ENCODE measurements at regions of chr14 and their contacts with region 1.

Region 1: GRCh38 chr14:59126710-59127432 is 61.6 kb upstream of the DAAM1 start:
- DNase-seq: no peak
- ATAC-seq: peak; percentile 92
- H3K4me3 ChIP-seq: no peak overlapping the region
- H3K27ac ChIP-seq: no peak overlapping the region
- H3K4me1 ChIP-seq: no peaks in the 10 kb centered on the region
- H3K27me3 ChIP-seq: no peaks in the 10 kb centered on the region
- CTCF ChIP-seq: peak; percentile 64 to 87 (median 64)
- EP300 ChIP-seq: no peak
- POLR2A ChIP-seq: no peak
- RAD21 ChIP-seq: peak; percentile 94

Region 2: DNA sequence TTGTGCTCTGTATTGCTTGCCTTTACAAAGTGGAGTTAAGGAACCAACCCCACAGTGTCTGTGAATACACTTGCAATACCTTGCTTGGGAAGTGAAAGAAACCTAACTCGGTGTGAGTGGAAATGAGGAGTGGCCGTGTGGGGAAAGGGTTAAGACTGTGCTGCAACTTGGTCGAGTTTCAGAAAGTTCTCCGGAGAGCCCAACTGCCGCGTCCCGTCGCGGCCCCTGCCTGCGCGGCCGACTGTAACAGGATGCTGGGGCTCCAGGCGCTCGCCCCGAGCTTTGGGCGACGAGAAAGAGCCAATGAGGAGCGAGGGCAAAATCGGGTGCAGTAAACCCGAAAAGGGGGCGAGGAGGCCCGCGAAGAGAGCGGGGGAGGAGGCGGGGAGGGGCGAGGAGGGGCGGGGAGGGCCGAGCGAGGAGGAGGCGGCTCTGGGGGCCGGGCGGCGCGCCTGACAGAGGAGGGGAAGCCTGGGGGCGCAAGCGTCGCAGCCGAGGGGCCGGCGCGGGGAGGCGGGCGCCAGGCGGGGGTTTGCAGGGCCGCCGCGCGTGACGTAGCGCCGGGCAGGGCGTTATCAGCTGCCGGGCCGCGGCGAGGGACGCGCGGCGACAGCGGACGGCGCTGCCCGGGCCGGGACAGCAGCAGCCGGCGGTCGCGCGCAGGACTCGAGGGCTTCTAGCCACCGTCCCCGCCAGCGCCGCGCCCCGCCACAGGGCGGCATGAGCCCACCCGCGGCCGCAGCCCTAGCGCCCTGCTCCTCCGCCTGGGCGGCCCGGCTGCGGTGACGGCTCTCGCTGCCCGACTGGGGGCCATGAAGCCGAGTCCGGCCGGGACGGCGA is 489.3 kb before region 1 on chr14 and contains the start of gene DACT1:
- CTCF ChIA-PET with region 1: interaction called, 19 read pairs
- POLR2A ChIA-PET with region 1: no interaction called
- RAD21 ChIA-PET with region 1: interaction called, 7 read pairs
- SMC1A ChIA-PET with region 1: interaction called, 54 read pairs
- in situ Hi-C with region 1: no loop called
- intact Hi-C with region 1: loop called (anchors 2 kb)
- DNase-seq: no peak
- ATAC-seq: peak; percentile 63
- H3K4me3 ChIP-seq: peak within 1 kb of the TSS; percentile 56; the same call in 1 of the 2 replicates
- H3K27ac ChIP-seq: no peak within 1 kb of the TSS
- H3K4me1 ChIP-seq: peaks cover 9% of the 10 kb centered on the region
- H3K27me3 ChIP-seq: peaks cover 0 to 8% of the 10 kb centered on the region in 2 experiments; a peak in 2 of 4 replicates
- CTCF ChIP-seq: no peak
- EP300 ChIP-seq: no peak
- POLR2A ChIP-seq: peak; percentile 49; the same call in 1 of the 2 replicates
- RAD21 ChIP-seq: no peak
- polyA plus RNA-seq, gene DACT1: 0.16 to 0.27 TPM

Region 3: DNA sequence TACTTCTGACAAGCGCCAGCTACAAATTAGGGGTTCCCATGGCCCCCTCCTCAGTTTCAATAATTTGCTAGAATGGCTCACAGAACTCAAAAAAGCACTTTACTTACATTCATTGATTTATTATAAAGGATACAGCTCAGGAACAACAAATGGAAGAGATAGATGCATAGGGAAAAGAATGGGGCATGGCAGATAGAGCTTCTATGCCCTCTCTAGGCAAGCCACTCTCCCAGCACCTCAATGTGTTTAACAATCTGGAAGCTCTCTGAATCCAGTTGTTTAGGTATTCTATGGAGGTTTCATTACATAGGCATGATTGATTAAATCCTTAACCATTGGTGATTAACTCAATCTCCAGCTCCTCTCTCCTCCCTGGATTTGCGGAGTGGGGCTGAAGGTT is 122.9 kb before region 1 on chr14:
- CTCF ChIA-PET with region 1: no interaction called
- POLR2A ChIA-PET with region 1: no interaction called
- RAD21 ChIA-PET with region 1: no interaction called
- SMC1A ChIA-PET with region 1: no interaction called
- in situ Hi-C with region 1: no loop called
- intact Hi-C with region 1: no loop called
- DNase-seq: no peak
- ATAC-seq: no peak
- H3K4me3 ChIP-seq: no peak overlapping the region
- H3K27ac ChIP-seq: no peak overlapping the region
- H3K4me1 ChIP-seq: no peaks in the 10 kb centered on the region
- H3K27me3 ChIP-seq: no peaks in the 10 kb centered on the region
- CTCF ChIP-seq: no peak
- EP300 ChIP-seq: no peak
- POLR2A ChIP-seq: no peak
- RAD21 ChIP-seq: peak; percentile 39; the same call in 1 of the 2 replicates

Region 4: DNA sequence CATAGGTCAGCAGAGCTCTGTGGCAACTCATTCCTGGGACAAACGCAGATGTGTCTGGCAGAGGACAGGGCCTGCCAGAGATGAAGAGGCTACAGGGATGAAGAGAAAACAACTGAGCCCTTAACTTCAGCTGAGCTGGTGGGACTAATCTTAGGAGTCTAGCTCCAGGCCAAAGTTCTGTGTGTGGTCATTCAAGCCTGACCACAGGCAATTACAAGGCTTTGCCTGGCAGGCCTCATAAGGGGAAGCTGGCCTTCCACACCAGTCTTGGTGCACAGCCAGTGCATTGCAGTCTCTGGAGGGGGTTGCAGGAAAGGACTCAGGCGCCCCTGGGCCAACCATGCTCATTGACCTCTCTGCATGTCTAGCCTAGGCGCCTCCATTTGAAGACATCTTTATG is 66.0 kb before region 1 on chr14:
- CTCF ChIA-PET with region 1: interaction called, 17 read pairs
- POLR2A ChIA-PET with region 1: no interaction called
- RAD21 ChIA-PET with region 1: interaction called, 18 read pairs
- SMC1A ChIA-PET with region 1: interaction called, 14 read pairs
- in situ Hi-C with region 1: no loop called
- intact Hi-C with region 1: no loop called
- DNase-seq: no peak
- ATAC-seq: peak; percentile 93
- H3K4me3 ChIP-seq: no peak overlapping the region
- H3K27ac ChIP-seq: no peak overlapping the region
- H3K4me1 ChIP-seq: no peaks in the 10 kb centered on the region
- H3K27me3 ChIP-seq: no peaks in the 10 kb centered on the region
- CTCF ChIP-seq: no peak
- EP300 ChIP-seq: no peak
- POLR2A ChIP-seq: no peak
- RAD21 ChIP-seq: no peak

Region 5: GRCh38 chr14:59254146-59254941 is 127.5 kb after region 1 on chr14:
- CTCF ChIA-PET with region 1: interaction called, 5 read pairs
- POLR2A ChIA-PET with region 1: no interaction called
- RAD21 ChIA-PET with region 1: interaction called, 4 read pairs
- SMC1A ChIA-PET with region 1: interaction called, 8 read pairs
- in situ Hi-C with region 1: no loop called
- intact Hi-C with region 1: loop called (anchors 2 kb)
- DNase-seq: no peak
- ATAC-seq: peak; percentile 47
- H3K4me3 ChIP-seq: no peak overlapping the region
- H3K27ac ChIP-seq: no peak overlapping the region
- H3K4me1 ChIP-seq: peaks cover 15% of the 10 kb centered on the region
- H3K27me3 ChIP-seq: no peaks in the 10 kb centered on the region
- CTCF ChIP-seq: no peak
- EP300 ChIP-seq: no peak
- POLR2A ChIP-seq: no peak
- RAD21 ChIP-seq: no peak

Region 6: GRCh38 chr14:59422069-59422881 is 295.4 kb after region 1 on chr14:
- CTCF ChIA-PET with region 1: interaction called, 20 read pairs
- POLR2A ChIA-PET with region 1: no interaction called
- RAD21 ChIA-PET with region 1: interaction called, 5 read pairs
- SMC1A ChIA-PET with region 1: interaction called, 11 read pairs
- in situ Hi-C with region 1: no loop called
- intact Hi-C with region 1: loop called (anchors 1 kb)
- DNase-seq: no peak
- ATAC-seq: peak; percentile 75
- H3K4me3 ChIP-seq: no peak overlapping the region
- H3K27ac ChIP-seq: no peak overlapping the region
- H3K4me1 ChIP-seq: peaks cover 5% of the 10 kb centered on the region; the same call in 1 of the 2 replicates
- H3K27me3 ChIP-seq: no peaks in the 10 kb centered on the region
- CTCF ChIP-seq: peak in 2 of 3 experiments; percentile 13 to 43; a peak in 3 of 6 replicates
- EP300 ChIP-seq: no peak
- POLR2A ChIP-seq: no peak
- RAD21 ChIP-seq: peak; percentile 56

Region 7: GRCh38 chr14:59576332-59577294 is 449.7 kb after region 1 on chr14 and contains the start of gene CCDC175:
- CTCF ChIA-PET with region 1: interaction called, 11 read pairs
- POLR2A ChIA-PET with region 1: no interaction called
- RAD21 ChIA-PET with region 1: no interaction called
- SMC1A ChIA-PET with region 1: interaction called, 8 read pairs
- in situ Hi-C with region 1: loop called (anchors 5 kb)
- intact Hi-C with region 1: loop called (anchors 1 kb)
- DNase-seq: peak; percentile 7
- ATAC-seq: peak; percentile 99
- H3K4me3 ChIP-seq: peak within 1 kb of the TSS; percentile 52; the same call in 1 of the 2 replicates
- H3K27ac ChIP-seq: no peak within 1 kb of the TSS
- H3K4me1 ChIP-seq: no peaks in the 10 kb centered on the region; the same call in 1 of the 2 replicates
- H3K27me3 ChIP-seq: peaks cover 0 to 5% of the 10 kb centered on the region in 2 experiments; a peak in 3 of 4 replicates
- CTCF ChIP-seq: peak; percentile 80 to 88 (median 85)
- EP300 ChIP-seq: no peak
- POLR2A ChIP-seq: no peak
- RAD21 ChIP-seq: peak; percentile 75
- polyA plus RNA-seq, gene CCDC175: not detected

Measured in GM12878 (cell line).